ENCODE measurements at regions of chr6 and their contacts with region 1.

Region 1: DNA sequence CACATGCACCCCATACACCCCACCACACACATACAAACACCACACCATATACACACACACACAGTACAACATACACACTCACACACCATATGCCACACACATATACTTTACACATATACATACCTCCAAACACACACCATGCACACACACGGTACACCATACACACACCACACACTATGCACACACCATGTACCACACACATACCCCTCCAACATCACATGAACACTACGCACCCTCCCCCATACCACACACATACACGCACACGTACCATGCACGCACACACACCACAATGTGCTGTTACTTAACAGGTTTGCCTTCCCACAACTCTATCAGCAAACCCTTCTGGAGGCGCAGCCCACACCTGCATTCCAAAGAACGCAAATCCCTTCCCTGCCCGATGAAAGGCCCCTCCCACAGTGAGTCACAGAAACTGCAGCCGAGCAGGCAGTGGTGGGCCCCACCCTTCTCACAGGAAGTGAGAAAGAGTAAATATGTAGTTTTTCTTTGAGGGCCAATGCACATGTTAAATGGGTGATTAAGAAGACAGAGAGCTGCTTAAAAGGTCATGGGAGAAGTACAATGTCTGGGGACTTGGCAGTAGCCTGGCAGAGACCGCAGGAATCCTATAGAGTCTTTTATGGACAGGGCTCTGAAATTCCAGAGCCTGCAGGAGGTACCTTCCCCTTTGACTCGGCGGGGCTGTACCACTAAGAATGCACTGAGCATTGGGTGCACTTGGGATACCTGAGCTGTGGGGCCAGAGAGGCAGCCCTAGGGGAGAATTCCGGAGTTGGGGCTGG is 34.1 kb upstream of the EZR start:
- DNase-seq: peak; percentile 100
- H3K4me3 ChIP-seq: no peak overlapping the region
- H3K27ac ChIP-seq: peak overlapping the region; percentile 95
- H3K4me1 ChIP-seq: peaks cover 57% of the 10 kb centered on the region
- H3K27me3 ChIP-seq: no peaks in the 10 kb centered on the region
- CTCF ChIP-seq: no peak

Region 2: GRCh38 chr6:158808941-158809678 is 44.2 kb before region 1 on chr6:
- CTCF ChIA-PET with region 1: no interaction called
- dilution Hi-C with region 1: loop called (anchors 5 kb)
- in situ Hi-C with region 1: loop called in 1 of 2 experiments (anchors 5 kb)
- intact Hi-C with region 1: no loop called
- DNase-seq: no peak
- H3K4me3 ChIP-seq: no peak overlapping the region
- H3K27ac ChIP-seq: peak overlapping the region; percentile 19
- H3K4me1 ChIP-seq: peaks cover 58% of the 10 kb centered on the region
- H3K27me3 ChIP-seq: no peaks in the 10 kb centered on the region
- CTCF ChIP-seq: no peak

Region 3: DNA sequence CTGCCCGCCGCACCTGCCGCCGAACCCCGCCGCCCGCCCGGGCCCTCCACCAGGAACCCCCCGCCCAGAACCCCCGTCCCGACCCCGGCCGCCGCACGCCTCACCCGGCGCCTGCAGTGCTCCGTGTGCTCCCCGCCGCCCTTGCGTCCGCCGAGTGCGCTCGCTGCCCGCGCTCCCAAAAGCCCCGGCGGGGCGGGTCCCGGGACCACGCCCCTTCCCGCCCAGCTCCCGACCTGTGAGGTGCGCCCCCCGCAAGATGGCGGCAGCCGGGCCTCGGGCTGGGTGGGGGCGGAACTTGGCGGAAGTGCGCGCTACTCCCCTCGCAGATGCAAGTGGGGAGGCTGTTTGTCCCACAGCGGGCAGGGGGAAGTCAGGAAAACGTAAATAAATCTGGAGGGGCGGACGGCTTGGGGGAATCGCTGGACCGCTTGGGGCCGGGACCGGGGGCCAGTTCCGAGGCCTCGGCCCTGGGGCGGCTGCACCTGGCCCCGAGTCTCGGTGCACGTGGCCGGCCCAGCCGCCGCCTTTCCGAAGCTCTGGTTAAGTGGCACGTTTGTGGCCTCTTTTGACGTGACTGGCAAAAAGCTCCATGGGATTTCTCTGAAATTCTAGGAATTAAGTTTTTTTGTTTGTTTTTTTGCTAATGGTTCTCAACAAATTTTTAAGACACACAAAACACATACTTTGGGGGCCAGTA is 33.9 kb before region 1 on chr6 and contains the start of gene EZR:
- CTCF ChIA-PET with region 1: no interaction called
- dilution Hi-C with region 1: loop called (anchors 5 kb)
- in situ Hi-C with region 1: loop called in 1 of 2 experiments (anchors 5 kb)
- intact Hi-C with region 1: loop called (anchors 1 kb)
- DNase-seq: peak; percentile 76
- H3K4me3 ChIP-seq: peak within 1 kb of the TSS; percentile 80 to 87 (median 80)
- H3K27ac ChIP-seq: peak within 1 kb of the TSS; percentile 96
- H3K4me1 ChIP-seq: peaks cover 21% of the 10 kb centered on the region
- H3K27me3 ChIP-seq: no peaks in the 10 kb centered on the region
- CTCF ChIP-seq: no peak
- total RNA-seq, gene EZR: 164 to 240 TPM

Region 4: GRCh38 chr6:158869826-158870648 is 16.8 kb after region 1 on chr6:
- CTCF ChIA-PET with region 1: no interaction called
- dilution Hi-C with region 1: no loop called
- in situ Hi-C with region 1: no loop called
- intact Hi-C with region 1: loop called (anchors 1 kb)
- DNase-seq: peak; percentile 99
- H3K4me3 ChIP-seq: peak overlapping the region in 2 of 3 experiments; percentile 35 to 41
- H3K27ac ChIP-seq: peak overlapping the region; percentile 100
- H3K4me1 ChIP-seq: peaks cover 16% of the 10 kb centered on the region
- H3K27me3 ChIP-seq: no peaks in the 10 kb centered on the region
- CTCF ChIP-seq: peak in 1 of 2 donors; percentile 50

Region 5: GRCh38 chr6:158897236-158897635 is 44.0 kb after region 1 on chr6:
- CTCF ChIA-PET with region 1: no interaction called
- dilution Hi-C with region 1: no loop called
- in situ Hi-C with region 1: no loop called
- intact Hi-C with region 1: loop called (anchors 1 kb)
- DNase-seq: peak; percentile 79
- H3K4me3 ChIP-seq: no peak overlapping the region
- H3K27ac ChIP-seq: peak overlapping the region; percentile 76
- H3K4me1 ChIP-seq: peaks cover 20% of the 10 kb centered on the region
- H3K27me3 ChIP-seq: no peaks in the 10 kb centered on the region
- CTCF ChIP-seq: no peak

Region 6: DNA sequence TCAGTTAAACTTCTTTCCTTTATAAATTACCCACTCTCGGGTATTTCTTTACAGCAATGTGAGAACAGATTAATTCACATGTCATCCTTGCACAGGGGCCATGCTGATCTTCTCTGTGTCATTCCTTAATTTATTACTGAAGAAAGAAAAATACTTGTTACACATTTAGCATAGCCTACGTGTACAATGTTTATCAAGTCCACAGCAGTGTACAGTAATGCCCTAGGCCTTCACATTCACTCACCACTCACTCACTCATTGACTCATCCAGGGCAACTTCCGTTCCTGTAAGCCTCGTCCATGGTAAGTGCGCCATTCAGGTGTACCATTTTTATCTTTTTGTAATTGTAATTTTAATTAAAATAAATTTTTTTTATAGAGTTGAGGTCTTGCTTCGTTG is 73.1 kb after region 1 on chr6:
- CTCF ChIA-PET with region 1: no interaction called
- dilution Hi-C with region 1: no loop called
- in situ Hi-C with region 1: no loop called
- intact Hi-C with region 1: loop called (anchors 5 kb)
- DNase-seq: peak; percentile 80
- H3K4me3 ChIP-seq: no peak overlapping the region
- H3K27ac ChIP-seq: peak overlapping the region; percentile 48
- H3K4me1 ChIP-seq: peaks cover 5% of the 10 kb centered on the region
- H3K27me3 ChIP-seq: no peaks in the 10 kb centered on the region
- CTCF ChIP-seq: no peak

Measured in mammary epithelial cell (primary cell).